Right ventricle myocardium inferior (tissue), 1 donor: ENCODE measurements at regions of chr6 and their contacts with region 1.

Region 1: DNA sequence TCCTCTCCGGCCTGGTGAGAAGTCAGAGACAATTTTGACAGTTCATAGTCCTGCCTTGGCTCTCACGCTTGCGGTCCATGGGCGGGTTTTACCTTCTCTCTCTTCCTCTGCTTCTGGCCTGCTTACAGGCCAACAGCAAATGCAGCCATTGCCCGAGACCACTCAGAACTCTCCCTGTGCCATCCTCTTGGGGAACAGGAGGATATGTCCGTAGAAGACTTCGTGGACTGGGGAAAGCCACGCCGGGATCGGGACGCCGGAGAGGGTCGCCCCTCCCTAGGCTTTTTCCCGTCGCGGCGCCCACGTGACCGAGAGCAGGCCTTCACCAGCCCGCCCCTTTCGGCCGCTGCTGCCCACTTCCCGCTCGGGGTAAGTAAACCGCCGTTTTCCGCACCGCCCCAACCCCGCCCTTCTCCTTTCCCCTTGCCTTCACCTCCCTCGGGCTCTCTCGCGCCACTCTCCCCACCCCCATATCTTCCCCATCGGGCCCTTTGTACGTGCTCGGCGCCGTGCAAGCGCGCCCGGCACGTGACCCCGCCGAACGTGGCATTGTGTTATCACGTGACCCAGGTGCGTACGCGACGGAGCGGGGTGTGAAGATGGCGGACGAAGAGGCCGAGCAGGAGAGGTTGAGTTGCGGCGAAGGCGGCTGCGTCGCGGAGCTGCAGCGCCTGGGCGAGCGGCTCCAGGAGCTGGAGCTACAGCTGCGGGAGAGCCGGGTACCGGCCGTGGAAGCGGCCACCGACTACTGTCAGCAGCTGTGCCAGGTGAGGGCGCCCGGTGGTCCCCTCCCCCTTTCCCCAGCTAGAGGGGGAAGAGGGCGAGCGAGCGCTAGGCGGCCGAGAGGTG is at the start of gene ZNF292:
- DNase-seq: peak; percentile 99
- ATAC-seq: peak; percentile 92
- total RNA-seq, gene ZNF292: 35.0 TPM

Region 2: GRCh38 chr6:86934365-86934764 is 220.9 kb before region 1 on chr6:
- intact Hi-C with region 1: no loop called
- DNase-seq: no peak
- ATAC-seq: no peak

Region 3: DNA sequence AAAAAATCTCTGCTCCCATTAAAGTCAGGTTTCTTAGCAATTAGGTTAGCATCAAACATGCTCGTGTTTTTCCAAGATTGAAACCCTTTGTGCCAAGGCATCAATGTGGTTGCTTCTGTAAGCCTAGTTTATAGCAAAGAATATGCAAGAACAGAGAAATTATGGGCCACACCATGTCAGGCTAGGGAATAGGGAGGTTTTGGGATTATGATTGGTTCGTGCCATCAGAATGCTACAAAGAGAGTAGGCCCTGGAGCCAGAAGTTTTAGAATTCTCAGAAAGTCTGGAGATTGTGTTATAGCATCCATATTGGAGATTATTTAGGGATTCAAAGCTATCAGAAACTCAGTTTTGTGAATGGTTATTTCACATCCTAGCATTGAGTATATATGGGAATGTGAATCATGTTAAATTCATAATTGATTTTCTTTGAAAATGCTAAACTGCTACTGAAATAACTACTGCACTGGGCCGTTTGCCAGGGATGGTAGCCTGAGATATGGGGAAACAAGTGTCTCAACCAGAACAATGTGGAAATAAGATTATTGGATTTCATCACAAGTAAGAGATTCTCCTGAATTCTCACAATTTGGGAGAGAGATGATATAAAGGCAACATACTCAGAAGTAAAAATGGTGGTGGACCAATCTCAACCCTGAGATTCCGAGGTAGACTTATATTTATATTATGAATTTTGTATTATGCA is 45.4 kb after region 1 on chr6:
- intact Hi-C with region 1: loop called (anchors 5 kb)
- DNase-seq: no peak
- ATAC-seq: no peak

Region 4: DNA sequence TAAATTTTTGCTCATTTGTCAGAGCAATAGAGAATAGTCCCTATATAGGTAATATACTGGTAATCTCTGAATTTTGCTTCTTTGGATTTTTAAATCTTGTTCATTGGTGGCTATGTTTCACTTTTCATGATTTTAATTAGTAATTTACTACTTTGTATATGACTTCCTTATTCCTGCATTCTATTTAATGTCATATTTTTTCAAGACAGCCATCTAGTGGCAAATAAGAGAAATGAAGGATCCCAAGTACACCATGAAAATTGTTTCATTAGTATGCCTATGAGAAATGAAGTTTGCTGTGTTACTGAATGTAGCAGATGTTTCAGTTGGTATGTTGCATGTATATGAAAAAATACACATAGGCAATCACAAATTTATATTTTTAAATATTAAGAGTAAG is 82.6 kb after region 1 on chr6:
- intact Hi-C with region 1: loop called (anchors 5 kb)
- DNase-seq: no peak
- ATAC-seq: no peak

Region 5: DNA sequence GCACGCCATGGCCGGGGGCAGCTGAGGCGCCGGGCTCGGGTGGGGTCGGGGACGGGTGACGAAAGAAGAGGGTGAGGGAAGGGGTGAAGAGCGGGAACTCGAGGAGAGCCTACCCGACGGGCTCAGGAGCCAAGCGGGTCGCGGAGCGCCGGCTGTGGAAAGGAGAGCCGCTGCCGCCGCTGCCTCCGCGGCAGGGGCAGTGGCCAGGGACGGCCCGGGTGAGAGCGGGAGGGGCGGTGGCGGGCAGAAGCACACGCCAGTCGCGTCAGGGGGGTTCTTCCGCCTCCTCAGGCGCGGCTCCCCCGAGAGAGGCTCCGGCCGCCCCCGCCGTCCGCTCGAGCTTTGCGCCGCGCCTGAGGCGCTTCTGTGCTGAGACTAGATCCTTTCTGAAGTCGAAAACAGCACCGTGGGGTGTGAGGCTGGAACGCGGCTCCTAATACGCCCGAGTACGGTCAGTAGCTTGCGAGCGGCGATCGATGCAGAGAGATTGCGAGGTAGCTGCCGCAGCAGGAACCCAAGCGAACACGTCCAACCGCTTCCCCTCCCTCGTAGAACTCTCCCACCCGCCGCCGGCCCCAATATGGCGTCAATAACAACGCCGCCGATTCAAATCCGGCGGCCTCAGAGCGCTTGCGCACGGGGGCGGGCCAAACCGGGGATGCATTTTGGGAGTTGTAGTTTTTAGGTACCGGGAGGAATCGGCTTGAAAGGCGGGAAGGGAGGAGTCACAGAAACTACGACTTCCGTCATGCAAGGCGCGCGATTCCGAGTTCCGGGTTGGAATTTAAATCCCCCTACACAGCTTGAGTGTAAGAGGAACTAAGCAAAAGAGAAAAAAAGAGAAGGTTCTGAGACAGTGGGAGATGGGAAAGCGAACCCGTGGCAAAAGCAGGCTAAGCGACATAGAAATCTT is 546.7 kb after region 1 on chr6 and contains the start of gene AKIRIN2:
- intact Hi-C with region 1: loop called (anchors 10 kb)
- DNase-seq: peak; percentile 97
- ATAC-seq: peak; percentile 94
- total RNA-seq, gene AKIRIN2: 36.1 TPM

Region 6: GRCh38 chr6:87968435-87969278 is 813.4 kb after region 1 on chr6:
- intact Hi-C with region 1: no loop called
- DNase-seq: no peak
- ATAC-seq: no peak